WTC11 (cell line): ENCODE measurements at regions of chr18 and their contacts with region 1.

Region 1: GRCh38 chr18:47204908-47205522 is 28.9 kb upstream of the IER3IP1 start:
- DNase-seq: peak; percentile 65
- ATAC-seq: peak; percentile 78
- H3K4me3 Mint-ChIP-seq: no peak overlapping the region
- H3K27ac Mint-ChIP-seq: no peak overlapping the region
- H3K4me1 Mint-ChIP-seq: peaks cover 12% of the 10 kb centered on the region
- H3K27me3 Mint-ChIP-seq: no peaks in the 10 kb centered on the region
- CTCF ChIP-seq: peak; percentile 54

Region 2: DNA sequence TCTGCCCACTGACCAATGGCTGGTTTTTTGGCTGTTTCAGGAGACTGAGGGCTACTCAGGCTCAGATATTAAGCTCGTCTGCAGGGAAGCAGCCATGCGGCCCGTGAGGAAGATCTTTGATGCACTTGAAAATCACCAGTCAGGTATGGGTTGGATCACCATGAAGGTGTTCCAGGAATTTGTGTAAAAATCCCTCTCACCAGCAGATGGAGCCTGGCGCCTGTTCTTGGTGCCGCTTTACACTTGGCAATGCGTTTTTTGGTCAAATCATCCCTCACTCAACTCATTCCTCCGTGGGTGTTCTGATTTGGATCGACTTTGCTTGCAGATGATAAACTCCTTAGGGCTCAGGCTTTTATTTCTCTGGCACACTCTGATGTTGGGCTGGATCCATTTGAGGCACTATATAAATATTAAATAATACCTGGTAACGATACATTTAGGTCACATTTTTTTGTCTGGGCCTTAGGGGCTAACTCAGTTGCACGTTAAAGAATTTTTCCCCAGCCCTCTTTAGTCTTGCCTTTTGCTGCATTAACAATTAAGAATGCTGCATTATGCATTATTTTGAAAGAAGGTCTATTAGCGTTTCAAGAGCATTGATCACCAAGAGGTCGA is 104.7 kb before region 1 on chr18:
- CTCF ChIA-PET with region 1: interaction called, 35 read pairs
- POLR2A ChIA-PET with region 1: no interaction called
- DNase-seq: peak; percentile 79
- ATAC-seq: peak; percentile 90
- H3K4me3 Mint-ChIP-seq: no peak overlapping the region
- H3K27ac Mint-ChIP-seq: no peak overlapping the region
- H3K4me1 Mint-ChIP-seq: peaks cover 16% of the 10 kb centered on the region
- H3K27me3 Mint-ChIP-seq: no peaks in the 10 kb centered on the region
- CTCF ChIP-seq: peak; percentile 50

Region 3: GRCh38 chr18:47150029-47150823 is 54.8 kb before region 1 on chr18 and contains the start of gene HDHD2:
- CTCF ChIA-PET with region 1: interaction called, 13 read pairs
- POLR2A ChIA-PET with region 1: no interaction called
- DNase-seq: peak; percentile 87
- ATAC-seq: peak; percentile 88
- H3K4me3 Mint-ChIP-seq: peak within 1 kb of the TSS; percentile 85
- H3K27ac Mint-ChIP-seq: peak within 1 kb of the TSS; percentile 92
- H3K4me1 Mint-ChIP-seq: peaks cover 22% of the 10 kb centered on the region
- H3K27me3 Mint-ChIP-seq: no peaks in the 10 kb centered on the region
- CTCF ChIP-seq: no peak
- total RNA-seq, gene HDHD2: 42.1 to 57.6 TPM (median 49.6 TPM) in 3 replicates

Region 4: GRCh38 chr18:47215554-47216138 is 10.6 kb after region 1 on chr18:
- CTCF ChIA-PET with region 1: interaction called, 24 read pairs
- POLR2A ChIA-PET with region 1: interaction called, 4 read pairs
- DNase-seq: peak; percentile 30
- ATAC-seq: peak; percentile 79
- H3K4me3 Mint-ChIP-seq: no peak overlapping the region
- H3K27ac Mint-ChIP-seq: no peak overlapping the region
- H3K4me1 Mint-ChIP-seq: peaks cover 7% of the 10 kb centered on the region
- H3K27me3 Mint-ChIP-seq: no peaks in the 10 kb centered on the region; the same call in 1 of the 2 replicates
- CTCF ChIP-seq: peak; percentile 26; the same call in 1 of the 2 replicates

Region 5: DNA sequence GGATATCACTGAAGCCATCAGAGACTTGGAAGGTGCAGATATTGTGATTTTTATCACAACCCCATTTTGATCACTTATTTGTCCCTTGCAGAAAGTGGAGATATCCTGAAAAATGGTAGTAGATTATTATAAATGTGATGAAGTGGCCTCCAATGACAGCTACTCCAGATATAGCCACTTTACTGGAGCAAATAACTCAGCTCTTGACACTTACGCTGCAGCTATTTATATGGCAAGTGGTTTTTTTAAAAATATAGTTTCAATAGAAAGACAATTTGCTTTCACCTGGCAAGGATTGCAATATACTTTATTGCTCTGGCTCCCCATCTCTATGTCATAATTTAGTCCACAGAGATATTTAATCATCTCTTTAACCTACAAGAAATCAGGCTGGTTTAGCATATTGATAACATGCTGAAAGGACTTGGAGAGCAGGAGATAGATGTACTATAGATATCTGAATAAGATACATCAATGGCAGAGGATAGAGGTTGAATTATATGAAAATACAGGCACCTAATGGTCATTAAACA is 229.3 kb after region 1 on chr18:
- CTCF ChIA-PET with region 1: no interaction called
- POLR2A ChIA-PET with region 1: no interaction called
- DNase-seq: no peak
- ATAC-seq: no peak
- H3K4me3 Mint-ChIP-seq: no peak overlapping the region
- H3K27ac Mint-ChIP-seq: no peak overlapping the region
- H3K4me1 Mint-ChIP-seq: no peaks in the 10 kb centered on the region
- H3K27me3 Mint-ChIP-seq: peaks cover 2% of the 10 kb centered on the region; the same call in 1 of the 2 replicates
- CTCF ChIP-seq: no peak

Region 6: DNA sequence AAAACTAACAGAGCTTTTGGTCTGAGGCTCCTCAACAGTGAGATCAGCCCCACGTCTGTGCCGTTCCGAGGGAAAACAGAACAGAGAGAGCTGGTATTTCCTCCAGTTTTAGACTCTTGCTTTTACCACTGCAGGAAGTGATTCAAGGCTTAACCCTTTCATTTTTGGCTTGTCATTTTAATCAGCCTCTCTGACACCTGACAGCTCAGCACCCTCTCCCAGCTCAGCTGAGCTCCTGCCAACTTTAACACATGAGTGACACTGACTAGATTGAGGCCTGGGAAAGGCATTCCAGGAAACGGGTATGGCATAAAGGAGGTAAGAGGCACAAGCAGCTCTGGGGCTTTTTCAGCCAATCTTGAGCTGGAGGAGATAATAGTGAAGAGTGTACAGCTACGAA is 285.9 kb after region 1 on chr18:
- CTCF ChIA-PET with region 1: no interaction called
- POLR2A ChIA-PET with region 1: no interaction called
- DNase-seq: no peak
- ATAC-seq: no peak
- H3K4me3 Mint-ChIP-seq: no peak overlapping the region
- H3K27ac Mint-ChIP-seq: no peak overlapping the region
- H3K4me1 Mint-ChIP-seq: peaks cover 4% of the 10 kb centered on the region
- H3K27me3 Mint-ChIP-seq: no peaks in the 10 kb centered on the region
- CTCF ChIP-seq: no peak